ENCODE measurements at regions of chr11 and their contacts with region 1.

Region 1: GRCh38 chr11:110195845-110196754 is 100.3 kb downstream of the RDX start:
- DNase-seq: no peak
- H3K4me3 Mint-ChIP-seq: no peak overlapping the region
- H3K27ac Mint-ChIP-seq: no peak overlapping the region
- H3K4me1 Mint-ChIP-seq: peaks cover 21% of the 10 kb centered on the region
- H3K27me3 Mint-ChIP-seq: peaks cover 41% of the 10 kb centered on the region

Region 2: GRCh38 chr11:109946322-109946846 is 249.7 kb before region 1 on chr11:
- intact Hi-C with region 1: loop called (anchors 2 kb)
- DNase-seq: peak; percentile 49
- H3K4me3 Mint-ChIP-seq: peak overlapping the region; percentile 43
- H3K27ac Mint-ChIP-seq: peak overlapping the region; percentile 65
- H3K4me1 Mint-ChIP-seq: peaks cover 14% of the 10 kb centered on the region
- H3K27me3 Mint-ChIP-seq: peaks cover 28% of the 10 kb centered on the region

Region 3: DNA sequence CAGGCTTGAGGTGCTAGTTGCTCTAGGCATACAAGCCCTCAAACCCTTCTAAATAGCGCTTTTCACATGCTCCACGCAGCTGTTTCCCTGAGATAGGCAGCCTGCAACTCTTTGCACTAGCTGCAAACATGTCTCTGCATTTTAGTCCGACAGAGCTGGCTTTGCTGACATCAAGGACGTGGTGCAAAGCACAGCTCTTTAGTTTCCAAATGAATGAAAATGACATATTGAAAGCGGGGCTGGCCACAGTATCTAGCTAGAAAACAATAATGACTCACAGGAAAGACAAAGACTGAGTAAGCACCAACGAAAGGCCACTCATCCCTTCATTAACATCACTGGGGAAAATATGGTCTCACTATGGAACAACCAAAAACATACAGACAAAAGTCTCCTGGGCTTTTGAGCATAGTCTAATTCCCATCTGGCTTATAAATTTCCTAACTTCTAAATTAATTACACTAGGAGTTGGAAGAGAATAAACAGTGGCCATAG is 118.2 kb before region 1 on chr11:
- intact Hi-C with region 1: loop called (anchors 2 kb)
- DNase-seq: peak; percentile 49
- H3K4me3 Mint-ChIP-seq: peak overlapping the region; percentile 47
- H3K27ac Mint-ChIP-seq: peak overlapping the region; percentile 96
- H3K4me1 Mint-ChIP-seq: peaks cover 40% of the 10 kb centered on the region
- H3K27me3 Mint-ChIP-seq: peaks cover 4% of the 10 kb centered on the region

Region 4: GRCh38 chr11:110367571-110367970 is 171.5 kb after region 1 on chr11:
- intact Hi-C with region 1: loop called (anchors 1 kb)
- DNase-seq: no peak
- H3K4me3 Mint-ChIP-seq: no peak overlapping the region
- H3K27ac Mint-ChIP-seq: no peak overlapping the region
- H3K4me1 Mint-ChIP-seq: peaks cover 16% of the 10 kb centered on the region
- H3K27me3 Mint-ChIP-seq: no peaks in the 10 kb centered on the region

Region 5: DNA sequence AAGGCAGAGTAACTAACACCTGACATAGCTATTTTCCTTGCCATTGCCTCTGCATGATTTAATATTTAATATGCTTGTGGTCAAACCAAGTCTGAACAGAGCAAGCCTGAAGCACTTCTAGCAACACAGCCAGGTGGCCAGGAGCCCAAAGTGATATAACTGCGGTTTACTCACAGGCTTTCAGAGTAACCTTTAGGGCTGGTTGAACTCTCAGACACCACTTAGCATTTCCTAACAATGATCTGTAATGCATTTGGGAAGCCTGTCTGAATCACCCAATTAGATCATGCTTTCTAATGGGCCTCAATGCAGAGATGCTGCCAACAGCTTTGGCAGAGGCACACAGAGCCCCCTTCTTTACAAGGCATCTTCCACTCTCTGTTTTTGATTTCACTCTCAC is 329.8 kb after region 1 on chr11:
- intact Hi-C with region 1: loop called (anchors 5 kb)
- DNase-seq: no peak
- H3K4me3 Mint-ChIP-seq: no peak overlapping the region
- H3K27ac Mint-ChIP-seq: no peak overlapping the region
- H3K4me1 Mint-ChIP-seq: peaks cover 13% of the 10 kb centered on the region
- H3K27me3 Mint-ChIP-seq: no peaks in the 10 kb centered on the region

Measured in activated T-helper 2 cell treated with anti-CD3 and anti-CD28 coated beads, Interferon-gamma antibody, Interleukin-2, Interleukin-4, amounts not matched to agents 10 μg/mL and 5 μg/mL and 100 μg/mL, durations not matched to agents 14 hours and 24 hours and 36 hours (primary cell).